ENCODE measurements at regions of chr12 and their contacts with region 1.

Region 1: DNA sequence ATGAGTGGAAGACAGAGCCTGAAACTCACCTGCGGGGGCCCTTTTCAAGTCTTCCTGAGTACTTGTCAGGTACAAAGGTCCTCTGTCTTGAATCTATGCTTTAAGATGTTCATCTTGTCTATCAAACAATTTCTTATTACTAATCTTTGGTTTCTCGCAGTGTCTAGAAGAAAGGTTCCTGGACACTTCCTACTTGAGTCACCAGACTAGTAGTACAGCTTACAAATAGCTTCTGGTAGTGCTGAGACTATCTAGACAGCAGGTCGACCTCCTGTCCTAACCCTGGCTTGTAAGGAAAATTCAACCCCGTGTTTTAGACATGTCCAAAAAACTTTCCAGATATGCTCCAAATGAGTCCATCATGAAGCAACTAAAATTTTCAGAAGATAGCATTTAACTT is 11.2 kb upstream of the ARID2 start:
- DNase-seq: no peak
- H3K4me3 ChIP-seq: no peak overlapping the region
- H3K27ac ChIP-seq: no peak overlapping the region
- H3K4me1 ChIP-seq: peaks cover 10 to 61% (median 41%) of the 10 kb centered on the region in 6 donors
- H3K27me3 ChIP-seq: no peaks in the 10 kb centered on the region
- CTCF ChIP-seq: no peak
- POLR2A ChIP-seq: no peak

Region 2: DNA sequence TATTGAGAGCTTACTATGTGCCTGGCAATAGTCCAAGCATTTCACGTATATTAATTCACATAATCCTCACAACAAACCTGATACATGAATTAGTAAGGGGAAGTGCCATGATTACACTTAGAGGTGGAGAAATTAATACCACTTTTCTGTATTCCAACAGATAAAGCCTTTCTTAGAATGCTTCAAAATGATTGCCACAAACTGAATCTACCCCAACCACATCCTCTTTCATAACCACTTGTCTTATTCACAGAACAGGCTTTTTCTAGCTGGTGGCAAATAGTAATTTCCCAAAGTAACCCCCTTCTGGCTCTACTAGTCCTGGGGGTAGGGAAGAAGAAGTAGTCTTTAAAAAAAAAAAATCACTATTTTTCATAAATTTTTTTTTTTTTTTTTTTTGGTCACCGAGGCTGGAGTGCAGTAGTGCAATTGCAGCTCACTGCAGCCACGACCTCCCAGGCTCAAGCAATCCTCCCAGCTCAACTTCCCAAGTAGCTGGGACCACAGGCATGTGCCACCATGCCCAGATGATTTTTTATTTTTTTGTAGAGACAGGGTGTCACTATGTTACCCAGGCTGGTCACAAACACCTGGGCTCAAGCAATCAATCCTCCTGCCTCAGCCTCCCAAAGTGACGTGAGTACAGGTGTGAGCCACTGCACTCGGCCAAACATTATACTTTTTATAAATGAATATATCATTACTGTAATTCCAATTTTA is 47.8 kb before region 1 on chr12:
- intact Hi-C with region 1: loop called (anchors 5 kb)
- DNase-seq: no peak
- H3K4me3 ChIP-seq: no peak overlapping the region
- H3K27ac ChIP-seq: peak overlapping the region in 5 of 8 donors; percentile 34 to 77 (median 64)
- H3K4me1 ChIP-seq: peaks cover 13 to 36% (median 28%) of the 10 kb centered on the region in 6 donors
- H3K27me3 ChIP-seq: no peaks in the 10 kb centered on the region
- CTCF ChIP-seq: no peak
- POLR2A ChIP-seq: no peak

Measured in spleen (tissue), 13 donors.